AG04449 (cell line): ENCODE measurements at regions of chr5 and their contacts with region 1.

Region 1: GRCh38 chr5:172188033-172188892 is at the start of gene STK10:
- DNase-seq: peak; percentile 42
- H3K4me3 ChIP-seq: peak within 1 kb of the TSS; percentile 93
- CTCF ChIP-seq: peak; percentile 98

Region 2: GRCh38 chr5:172059661-172060100 is 128.6 kb before region 1 on chr5:
- CTCF ChIA-PET with region 1: interaction called, 29 read pairs
- POLR2A ChIA-PET with region 1: interaction called, 3 read pairs
- DNase-seq: no peak
- H3K4me3 ChIP-seq: no peak overlapping the region
- CTCF ChIP-seq: peak; percentile 29

Region 3: GRCh38 chr5:172076761-172077244 is 111.5 kb before region 1 on chr5:
- CTCF ChIA-PET with region 1: interaction called, 17 read pairs
- POLR2A ChIA-PET with region 1: no interaction called
- DNase-seq: peak; percentile 21
- H3K4me3 ChIP-seq: no peak overlapping the region
- CTCF ChIP-seq: no peak

Region 4: DNA sequence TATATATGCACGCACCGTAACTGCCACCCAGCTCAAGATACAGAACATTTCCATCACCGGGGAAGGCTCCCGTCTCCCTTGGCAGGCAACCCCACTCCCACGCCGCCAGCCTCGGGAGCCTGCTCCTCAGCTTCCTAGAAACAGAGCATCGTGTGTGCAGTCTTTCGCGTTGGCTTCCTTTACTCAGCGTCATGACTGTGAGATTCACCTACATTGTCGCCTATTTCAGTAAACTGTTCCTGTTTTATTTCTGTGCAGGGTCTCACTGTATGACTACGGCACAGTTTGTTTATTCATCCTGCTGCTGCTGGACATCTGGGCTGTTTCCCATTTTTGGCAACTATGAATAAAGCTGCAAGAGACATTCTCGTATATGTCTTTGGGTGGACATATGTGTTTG is 90.9 kb before region 1 on chr5:
- CTCF ChIA-PET with region 1: interaction called, 114 read pairs
- POLR2A ChIA-PET with region 1: interaction called, 3 read pairs
- DNase-seq: no peak
- H3K4me3 ChIP-seq: no peak overlapping the region
- CTCF ChIP-seq: no peak

Region 5: GRCh38 chr5:172173831-172174153 is 14.5 kb before region 1 on chr5:
- CTCF ChIA-PET with region 1: interaction called, 19 read pairs
- POLR2A ChIA-PET with region 1: interaction called, 14 read pairs
- DNase-seq: no peak
- H3K4me3 ChIP-seq: no peak overlapping the region
- CTCF ChIP-seq: no peak

Region 6: DNA sequence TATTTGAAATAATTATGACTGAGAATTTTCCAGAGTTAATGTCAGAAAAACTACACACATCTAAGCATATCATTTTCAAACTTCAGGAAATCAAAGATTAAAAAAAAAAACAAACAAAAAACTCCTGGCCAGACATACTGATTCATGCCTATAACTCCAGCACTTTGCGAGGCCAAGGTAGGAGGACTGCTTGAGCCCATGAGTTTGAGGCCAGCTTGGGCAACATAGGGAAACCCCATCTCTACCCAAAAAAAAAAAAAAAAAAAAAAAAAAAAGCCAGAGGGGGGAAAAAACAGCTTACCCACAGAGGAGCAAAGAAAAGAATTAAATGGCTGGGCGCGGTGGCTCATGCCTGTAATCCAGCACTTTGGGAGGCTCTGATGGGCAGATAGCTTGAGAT is 28.1 kb after region 1 on chr5:
- CTCF ChIA-PET with region 1: interaction called, 24 read pairs
- POLR2A ChIA-PET with region 1: interaction called, 3 read pairs
- DNase-seq: no peak
- H3K4me3 ChIP-seq: no peak overlapping the region
- CTCF ChIP-seq: no peak